Tibial artery (tissue), 4 donors: ENCODE measurements at regions of chr4 and their contacts with region 1.

Region 1: DNA sequence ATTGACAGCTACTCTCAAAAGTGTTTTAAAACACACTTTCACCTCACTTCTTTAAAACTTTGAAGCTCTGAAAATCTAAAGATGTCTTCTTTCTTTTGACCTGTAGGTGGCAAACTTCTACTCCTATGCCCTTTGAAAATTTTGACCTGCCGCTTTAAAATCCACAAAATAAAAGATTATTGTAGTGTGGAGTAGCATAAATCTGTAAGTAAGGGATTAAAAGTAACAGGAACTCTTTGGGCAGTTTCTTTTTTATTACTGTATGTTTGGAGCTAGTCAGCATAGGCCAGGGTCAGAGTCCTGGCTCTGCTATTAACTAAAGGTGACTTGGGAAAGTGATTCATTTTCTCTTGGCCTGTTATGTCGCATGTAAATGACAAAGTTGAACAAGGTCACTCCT is 25.5 kb downstream of the BBS12 start:
- DNase-seq: no peak
- H3K4me3 ChIP-seq: no peak overlapping the region
- H3K27ac ChIP-seq: no peak overlapping the region
- H3K4me1 ChIP-seq: peaks cover 0 to 5% (median 0%) of the 10 kb centered on the region in 4 donors
- H3K27me3 ChIP-seq: no peaks in the 10 kb centered on the region
- CTCF ChIP-seq: peak; percentile 60 to 79

Region 2: GRCh38 chr4:122922877-122923511 is 165.0 kb after region 1 on chr4:
- intact Hi-C with region 1: loop called (anchors 5 kb)
- DNase-seq: peak; percentile 82 to 88
- H3K4me3 ChIP-seq: peak overlapping the region; percentile 91 to 99
- H3K27ac ChIP-seq: peak overlapping the region; percentile 68 to 81
- H3K4me1 ChIP-seq: peaks cover 0 to 26% (median 19%) of the 10 kb centered on the region in 4 donors
- H3K27me3 ChIP-seq: no peaks in the 10 kb centered on the region
- CTCF ChIP-seq: no peak

Region 3: DNA sequence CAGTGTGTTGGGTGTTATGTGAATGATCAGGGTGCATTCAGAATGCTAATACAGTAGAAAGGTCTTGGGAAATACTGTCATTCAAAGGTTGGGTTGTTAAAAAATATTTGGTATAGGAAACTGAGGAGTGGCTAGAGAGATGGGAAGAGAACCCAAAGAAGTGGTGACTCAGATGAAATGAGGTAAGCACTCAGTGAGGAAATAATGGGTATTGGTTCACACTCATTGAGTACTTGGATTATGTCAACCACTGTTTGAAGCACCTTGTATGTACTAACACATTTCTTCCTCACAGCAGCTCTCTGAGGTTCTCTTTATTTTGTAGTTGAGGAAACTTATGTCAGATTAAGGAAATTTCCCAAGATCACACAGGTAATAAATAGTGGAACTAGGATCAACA is 205.2 kb after region 1 on chr4:
- intact Hi-C with region 1: no loop called
- DNase-seq: no peak
- H3K4me3 ChIP-seq: no peak overlapping the region
- H3K27ac ChIP-seq: no peak overlapping the region
- H3K4me1 ChIP-seq: peaks cover 0 to 27% (median 3%) of the 10 kb centered on the region in 4 donors
- H3K27me3 ChIP-seq: no peaks in the 10 kb centered on the region
- CTCF ChIP-seq: no peak